Endothelial cell of umbilical vein (primary cell): ENCODE measurements at regions of chr7 and their contacts with region 1.

Region 1: GRCh38 chr7:14457568-14458453 is 444.7 kb downstream of the DGKB start:
- DNase-seq: peak; percentile 79
- H3K4me3 ChIP-seq: no peak overlapping the region
- H3K27ac ChIP-seq: no peak overlapping the region
- H3K4me1 ChIP-seq: no peaks in the 10 kb centered on the region
- H3K27me3 ChIP-seq: no peaks in the 10 kb centered on the region
- CTCF ChIP-seq: peak; percentile 71 to 73
- POLR2A ChIP-seq: no peak

Region 2: DNA sequence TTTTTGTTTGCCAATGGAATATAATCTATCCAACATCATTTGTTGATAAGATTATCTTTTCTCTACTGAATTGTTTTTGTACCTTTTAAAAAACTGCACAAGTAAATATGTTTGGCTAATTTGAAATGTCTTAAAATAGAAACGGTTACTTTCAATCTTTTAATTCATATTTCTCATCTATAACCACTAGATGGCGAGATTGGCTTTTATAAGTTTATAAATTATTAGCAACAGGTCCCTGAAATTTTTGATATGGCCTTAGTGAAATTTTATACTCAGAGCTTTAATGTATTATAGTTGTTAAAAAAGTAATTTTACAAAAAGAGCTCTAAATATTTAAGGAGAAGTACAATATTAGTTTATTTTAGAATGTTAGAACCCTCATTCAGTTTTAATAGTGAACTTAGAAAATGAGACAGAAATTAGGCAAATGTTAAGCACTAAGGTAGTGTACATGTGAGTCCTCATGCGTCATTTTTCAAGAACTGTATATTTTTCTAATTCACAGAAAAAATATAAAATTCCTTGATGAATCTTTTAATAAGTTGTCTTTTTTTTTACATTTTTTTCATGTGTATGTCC is 1177.9 kb before region 1 on chr7:
- CTCF ChIA-PET with region 1: interaction called, 148 read pairs
- POLR2A ChIA-PET with region 1: no interaction called
- dilution Hi-C with region 1: no loop called
- intact Hi-C with region 1: loop called (anchors 1 kb)
- DNase-seq: peak; percentile 24
- H3K4me3 ChIP-seq: no peak overlapping the region
- H3K27ac ChIP-seq: no peak overlapping the region
- H3K4me1 ChIP-seq: no peaks in the 10 kb centered on the region
- H3K27me3 ChIP-seq: no peaks in the 10 kb centered on the region
- CTCF ChIP-seq: peak in 1 of 2 donors; percentile 18
- POLR2A ChIP-seq: no peak

Region 3: DNA sequence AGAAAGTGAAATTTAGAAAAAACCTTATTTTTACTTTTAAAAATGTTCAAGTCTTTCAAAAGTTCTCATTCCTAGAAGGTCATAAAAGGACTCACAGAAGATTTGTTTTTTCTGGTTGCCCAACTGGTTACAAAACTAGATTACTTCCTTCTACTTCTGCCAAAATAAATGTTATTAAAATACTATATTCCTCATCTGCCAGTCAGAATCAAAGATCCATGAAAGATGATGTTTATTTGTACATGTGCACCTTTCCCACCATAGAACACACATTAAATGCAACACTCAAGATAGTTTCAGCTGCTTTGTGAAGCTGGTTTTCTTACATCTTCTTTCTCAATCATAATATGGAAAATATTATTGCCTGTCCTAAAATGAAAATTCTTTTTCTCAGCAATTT is 933.7 kb before region 1 on chr7:
- CTCF ChIA-PET with region 1: interaction called, 16 read pairs
- POLR2A ChIA-PET with region 1: no interaction called
- dilution Hi-C with region 1: no loop called
- intact Hi-C with region 1: loop called (anchors 1 kb)
- DNase-seq: no peak
- H3K4me3 ChIP-seq: no peak overlapping the region
- H3K27ac ChIP-seq: no peak overlapping the region
- H3K4me1 ChIP-seq: no peaks in the 10 kb centered on the region
- H3K27me3 ChIP-seq: no peaks in the 10 kb centered on the region
- CTCF ChIP-seq: no peak
- POLR2A ChIP-seq: no peak

Region 4: DNA sequence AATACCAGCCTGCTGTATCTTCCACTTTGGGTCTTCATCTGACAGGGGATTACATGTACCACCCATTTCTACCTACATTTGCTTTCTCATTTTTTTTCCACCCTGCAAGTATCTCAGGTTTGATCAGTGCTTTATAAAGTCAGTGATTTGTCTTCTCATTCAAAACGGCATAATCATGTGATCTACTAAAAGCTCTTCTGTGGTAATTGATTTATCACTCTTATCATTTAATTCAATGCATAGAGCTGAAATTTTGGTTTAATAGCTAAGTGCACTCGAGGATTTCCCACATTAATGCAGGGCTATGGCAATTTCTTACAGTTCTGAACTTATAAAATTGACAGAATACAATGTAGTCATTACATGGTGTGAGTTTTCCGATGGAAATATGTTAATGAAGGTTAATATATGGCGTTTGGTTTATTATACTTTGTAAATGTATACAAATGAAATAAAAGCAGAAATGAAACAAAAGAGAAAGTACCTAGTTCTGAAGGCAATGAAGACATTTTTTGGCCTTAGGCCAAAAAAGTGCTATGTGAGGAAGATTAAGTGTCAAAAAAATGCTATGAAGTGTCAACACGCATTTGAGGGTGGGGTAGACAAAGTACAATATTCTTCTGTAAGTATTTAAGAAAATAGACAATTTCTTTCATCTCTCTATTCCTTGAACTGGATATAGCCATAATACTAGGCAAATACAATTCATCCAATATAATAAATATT is 925.6 kb before region 1 on chr7:
- CTCF ChIA-PET with region 1: interaction called, 10 read pairs
- POLR2A ChIA-PET with region 1: no interaction called
- dilution Hi-C with region 1: no loop called
- intact Hi-C with region 1: no loop called
- DNase-seq: no peak
- H3K4me3 ChIP-seq: no peak overlapping the region
- H3K27ac ChIP-seq: no peak overlapping the region
- H3K4me1 ChIP-seq: no peaks in the 10 kb centered on the region
- H3K27me3 ChIP-seq: no peaks in the 10 kb centered on the region
- CTCF ChIP-seq: no peak
- POLR2A ChIP-seq: no peak

Region 5: GRCh38 chr7:13860734-13861133 is 597.1 kb before region 1 on chr7:
- CTCF ChIA-PET with region 1: no interaction called
- POLR2A ChIA-PET with region 1: no interaction called
- dilution Hi-C with region 1: no loop called
- intact Hi-C with region 1: loop called (anchors 10 kb)
- DNase-seq: no peak
- H3K4me3 ChIP-seq: no peak overlapping the region
- H3K27ac ChIP-seq: no peak overlapping the region
- H3K4me1 ChIP-seq: no peaks in the 10 kb centered on the region
- H3K27me3 ChIP-seq: no peaks in the 10 kb centered on the region
- CTCF ChIP-seq: no peak
- POLR2A ChIP-seq: no peak

Region 6: DNA sequence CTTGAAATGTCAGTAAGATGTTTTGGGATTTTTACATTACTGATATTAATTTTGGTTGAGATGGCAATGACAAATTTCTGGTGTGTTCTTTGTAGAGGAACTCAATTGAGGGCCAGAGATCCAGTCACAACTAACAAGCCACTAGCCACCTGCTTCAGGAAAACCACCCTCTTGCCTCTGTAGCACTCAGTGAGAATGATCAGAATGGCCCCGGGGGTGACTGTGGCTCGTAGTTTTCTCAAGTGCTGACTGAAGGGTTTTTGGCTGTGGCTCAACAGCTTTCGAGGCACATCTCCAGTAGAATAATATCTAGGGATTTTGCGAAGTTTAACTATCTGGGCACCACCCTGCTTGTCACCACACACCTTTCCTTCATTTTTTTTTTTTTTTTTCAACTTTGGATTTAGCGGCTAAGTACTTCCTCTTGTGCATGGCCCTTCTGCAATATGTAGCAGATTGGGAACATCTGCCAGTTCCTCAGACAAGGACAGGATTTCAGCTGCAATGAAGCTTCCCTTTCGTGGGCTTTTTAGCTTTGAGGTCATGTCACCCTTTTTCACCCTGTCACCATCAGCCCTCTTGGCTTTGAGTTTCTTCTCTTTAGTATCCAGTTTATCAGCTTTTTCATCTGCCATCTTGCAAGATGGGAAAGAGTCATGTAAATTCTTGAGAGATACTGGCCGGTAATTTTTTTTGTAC is 386.9 kb before region 1 on chr7:
- CTCF ChIA-PET with region 1: no interaction called
- POLR2A ChIA-PET with region 1: no interaction called
- dilution Hi-C with region 1: no loop called
- intact Hi-C with region 1: no loop called
- DNase-seq: no peak
- H3K4me3 ChIP-seq: no peak overlapping the region
- H3K27ac ChIP-seq: no peak overlapping the region
- H3K4me1 ChIP-seq: no peaks in the 10 kb centered on the region
- H3K27me3 ChIP-seq: no peaks in the 10 kb centered on the region
- CTCF ChIP-seq: no peak
- POLR2A ChIP-seq: no peak